Activated CD4-positive, alpha-beta memory T cell treated with anti-CD3 and anti-CD28 coated beads for 36 hours (primary cell): ENCODE measurements at regions of chr1 and their contacts with region 1.

Region 1: GRCh38 chr1:235181561-235182245 is 20.7 kb upstream of the RBM34 start:
- DNase-seq: peak; percentile 28
- H3K4me3 Mint-ChIP-seq: no peak overlapping the region
- H3K27ac Mint-ChIP-seq: peak overlapping the region; percentile 13
- H3K4me1 Mint-ChIP-seq: peaks cover 18% of the 10 kb centered on the region
- H3K27me3 Mint-ChIP-seq: no peaks in the 10 kb centered on the region

Region 2: DNA sequence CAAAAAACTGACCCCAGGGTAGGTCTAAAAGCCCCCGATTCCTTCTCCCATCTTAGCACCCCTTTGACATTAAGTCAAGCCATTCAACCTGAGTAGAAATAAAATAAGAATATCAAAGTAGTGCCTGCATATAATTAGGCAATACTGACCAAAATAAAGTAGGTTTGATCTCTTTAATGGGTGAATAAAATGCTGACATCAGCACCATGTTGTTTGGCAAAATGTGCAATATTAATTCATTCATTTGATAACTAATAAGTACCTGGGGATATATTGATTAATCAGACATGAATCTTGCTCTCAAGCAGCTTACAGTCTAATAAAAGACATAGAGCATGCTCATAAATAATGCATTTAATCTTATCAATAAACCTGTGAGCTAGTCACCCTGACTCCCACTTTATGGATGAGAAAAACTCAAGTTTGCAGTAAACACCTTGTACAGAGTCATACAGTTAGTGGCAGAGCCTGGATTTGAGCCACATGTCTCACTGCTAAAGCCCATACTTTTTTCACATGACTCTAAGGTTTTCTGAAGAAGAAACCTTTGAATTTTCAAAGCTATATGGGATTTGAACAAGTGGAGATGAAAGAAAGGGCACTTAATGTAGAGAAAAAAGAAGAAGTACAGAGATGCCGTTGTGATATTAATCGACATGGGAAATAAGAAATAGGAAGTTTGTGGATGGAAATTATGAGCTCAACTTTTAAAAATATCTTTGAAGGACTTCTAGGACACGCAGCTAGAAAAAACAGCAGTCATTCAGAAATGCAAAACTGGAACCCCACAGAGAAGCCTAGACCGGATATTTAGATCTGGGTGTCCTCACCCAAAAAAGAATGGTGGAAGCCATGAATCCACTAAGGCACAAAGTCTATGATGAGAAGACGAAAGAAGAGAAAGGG is 237.0 kb before region 1 on chr1:
- CTCF ChIA-PET with region 1: no interaction called
- POLR2A ChIA-PET with region 1: no interaction called
- intact Hi-C with region 1: no loop called
- DNase-seq: peak; percentile 8
- H3K4me3 Mint-ChIP-seq: no peak overlapping the region
- H3K27ac Mint-ChIP-seq: peak overlapping the region; percentile 71
- H3K4me1 Mint-ChIP-seq: peaks cover 19% of the 10 kb centered on the region
- H3K27me3 Mint-ChIP-seq: no peaks in the 10 kb centered on the region

Region 3: GRCh38 chr1:235151033-235151432 is 30.7 kb before region 1 on chr1:
- CTCF ChIA-PET with region 1: no interaction called
- POLR2A ChIA-PET with region 1: no interaction called
- intact Hi-C with region 1: no loop called
- DNase-seq: no peak
- H3K4me3 Mint-ChIP-seq: no peak overlapping the region
- H3K27ac Mint-ChIP-seq: no peak overlapping the region
- H3K4me1 Mint-ChIP-seq: peaks cover 29% of the 10 kb centered on the region
- H3K27me3 Mint-ChIP-seq: no peaks in the 10 kb centered on the region

Region 4: DNA sequence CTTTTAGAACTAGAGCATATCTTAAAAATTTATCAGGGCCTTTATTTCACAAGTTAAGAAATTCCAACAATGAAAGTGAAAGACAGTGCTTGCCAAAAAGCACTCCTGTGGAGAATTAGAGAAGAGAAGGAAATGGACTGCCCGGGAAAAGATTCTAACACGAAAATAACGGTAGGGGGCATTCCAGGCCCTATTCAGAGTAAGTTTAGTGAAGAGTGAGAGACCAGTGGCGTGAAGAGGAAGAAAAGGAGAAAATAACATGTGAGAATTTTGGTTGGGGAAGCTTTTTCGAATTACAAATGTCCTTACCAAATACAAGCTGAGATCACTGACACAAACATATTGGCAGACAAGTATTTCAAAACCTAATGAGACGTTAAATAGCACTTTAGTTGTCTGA is 17.7 kb after region 1 on chr1:
- CTCF ChIA-PET with region 1: no interaction called
- POLR2A ChIA-PET with region 1: no interaction called
- intact Hi-C with region 1: no loop called
- DNase-seq: no peak
- H3K4me3 Mint-ChIP-seq: no peak overlapping the region
- H3K27ac Mint-ChIP-seq: no peak overlapping the region
- H3K4me1 Mint-ChIP-seq: peaks cover 2% of the 10 kb centered on the region
- H3K27me3 Mint-ChIP-seq: no peaks in the 10 kb centered on the region

Region 5: DNA sequence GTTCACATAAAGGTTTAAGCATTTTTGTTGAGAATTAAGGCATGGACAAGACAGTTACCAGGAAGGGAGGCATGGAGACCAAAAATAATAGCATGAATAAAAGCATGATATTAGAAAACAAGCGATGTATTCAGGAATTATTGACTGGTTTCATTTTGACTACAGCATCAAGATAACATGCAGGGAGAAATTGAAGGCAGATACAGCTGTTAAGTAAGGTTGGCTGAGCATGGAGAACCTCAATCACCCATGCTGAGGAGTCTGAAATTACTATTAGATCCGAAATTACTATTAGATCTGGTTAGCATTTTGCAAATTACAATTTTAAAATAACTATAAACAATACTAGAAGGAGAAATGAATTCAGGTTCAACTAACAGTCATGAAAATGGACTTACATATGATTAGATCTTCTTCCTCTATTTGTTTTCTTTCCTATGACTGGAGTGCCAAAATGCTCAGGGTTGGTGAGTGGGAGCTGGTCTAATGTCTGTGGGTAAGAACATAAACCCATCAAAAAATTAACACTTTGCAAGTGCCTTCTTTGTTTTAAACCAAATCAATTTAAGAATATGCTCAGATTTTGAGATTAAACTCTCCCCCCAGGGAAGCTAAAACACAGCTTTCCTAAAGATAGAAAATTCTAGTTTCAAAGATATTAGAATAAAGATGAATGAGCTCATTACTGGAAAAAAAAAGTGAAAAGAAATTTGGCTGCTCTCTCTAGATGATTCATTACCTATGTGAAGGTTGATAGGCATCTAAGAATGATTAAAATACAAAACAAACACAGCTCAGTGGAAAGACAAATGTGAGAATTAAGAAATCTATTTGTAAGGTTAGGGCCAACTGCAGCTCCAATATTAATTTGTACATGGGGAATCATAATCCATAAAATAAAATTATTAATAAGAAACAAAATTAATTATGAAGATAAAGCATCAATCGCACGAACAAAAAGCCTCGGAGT is 64.6 kb after region 1 on chr1:
- CTCF ChIA-PET with region 1: no interaction called
- POLR2A ChIA-PET with region 1: no interaction called
- intact Hi-C with region 1: loop called (anchors 10 kb)
- DNase-seq: no peak
- H3K4me3 Mint-ChIP-seq: no peak overlapping the region
- H3K27ac Mint-ChIP-seq: no peak overlapping the region
- H3K4me1 Mint-ChIP-seq: peaks cover 36% of the 10 kb centered on the region
- H3K27me3 Mint-ChIP-seq: no peaks in the 10 kb centered on the region

Region 6: GRCh38 chr1:235304549-235305451 is 123.1 kb after region 1 on chr1:
- CTCF ChIA-PET with region 1: no interaction called
- POLR2A ChIA-PET with region 1: no interaction called
- intact Hi-C with region 1: no loop called
- DNase-seq: peak; percentile 36
- H3K4me3 Mint-ChIP-seq: peak overlapping the region; percentile 49
- H3K27ac Mint-ChIP-seq: peak overlapping the region; percentile 87
- H3K4me1 Mint-ChIP-seq: peaks cover 51% of the 10 kb centered on the region
- H3K27me3 Mint-ChIP-seq: no peaks in the 10 kb centered on the region